GM10248 (cell line): ENCODE measurements at regions of chr22 and their contacts with region 1.

Region 1: DNA sequence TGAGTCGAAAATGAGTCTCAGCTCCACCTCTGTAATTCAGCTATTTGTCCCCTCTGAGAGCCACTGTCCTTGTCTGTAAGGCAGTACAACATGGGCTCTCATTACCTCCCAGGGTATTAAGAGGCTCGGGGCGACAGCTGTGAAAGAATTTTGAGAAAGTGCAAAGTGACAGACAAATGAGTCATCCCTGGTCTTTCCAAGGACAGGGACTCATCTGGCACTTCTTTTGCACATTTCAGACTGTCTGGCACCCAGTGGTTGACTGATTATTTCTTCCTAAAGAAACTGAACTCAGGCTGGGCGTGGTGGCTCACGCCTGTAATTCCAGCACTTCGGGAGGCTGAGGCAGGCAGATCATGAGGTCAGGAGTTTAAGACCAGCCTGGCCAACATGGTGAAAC is 62.1 kb upstream of the ARFGAP3 start:
- DNase-seq: no peak
- CTCF ChIP-seq: no peak

Region 2: GRCh38 chr22:42717197-42717928 is 201.8 kb before region 1 on chr22:
- CTCF ChIA-PET with region 1: no interaction called
- POLR2A ChIA-PET with region 1: no interaction called
- DNase-seq: no peak
- CTCF ChIP-seq: no peak

Region 3: GRCh38 chr22:42856865-42857704 is 62.1 kb before region 1 on chr22 and contains the start of gene ARFGAP3:
- CTCF ChIA-PET with region 1: no interaction called
- POLR2A ChIA-PET with region 1: interaction called, 12 read pairs
- DNase-seq: peak; percentile 100
- CTCF ChIP-seq: no peak

Region 4: DNA sequence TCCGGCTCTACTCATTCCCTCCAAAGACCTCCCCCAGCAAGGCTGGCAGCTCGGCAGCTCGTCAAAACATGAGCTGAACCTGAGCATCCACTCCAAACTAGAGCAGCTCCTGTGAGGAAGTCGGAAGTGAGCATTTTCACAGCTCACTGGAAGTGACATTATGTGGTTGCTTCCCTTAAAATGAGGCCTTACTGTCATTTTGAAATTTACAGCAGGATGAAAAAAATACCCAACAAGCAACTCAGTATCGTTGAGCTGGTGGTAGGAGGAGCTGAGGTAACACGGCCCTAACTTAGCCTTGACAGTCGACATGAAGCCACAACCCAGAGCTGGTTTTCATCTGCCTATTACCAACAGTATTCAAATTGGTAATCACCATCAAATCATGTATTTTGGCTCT is 24.1 kb before region 1 on chr22:
- CTCF ChIA-PET with region 1: interaction called, 11 read pairs
- POLR2A ChIA-PET with region 1: no interaction called
- DNase-seq: peak; percentile 64
- CTCF ChIP-seq: no peak

Region 5: DNA sequence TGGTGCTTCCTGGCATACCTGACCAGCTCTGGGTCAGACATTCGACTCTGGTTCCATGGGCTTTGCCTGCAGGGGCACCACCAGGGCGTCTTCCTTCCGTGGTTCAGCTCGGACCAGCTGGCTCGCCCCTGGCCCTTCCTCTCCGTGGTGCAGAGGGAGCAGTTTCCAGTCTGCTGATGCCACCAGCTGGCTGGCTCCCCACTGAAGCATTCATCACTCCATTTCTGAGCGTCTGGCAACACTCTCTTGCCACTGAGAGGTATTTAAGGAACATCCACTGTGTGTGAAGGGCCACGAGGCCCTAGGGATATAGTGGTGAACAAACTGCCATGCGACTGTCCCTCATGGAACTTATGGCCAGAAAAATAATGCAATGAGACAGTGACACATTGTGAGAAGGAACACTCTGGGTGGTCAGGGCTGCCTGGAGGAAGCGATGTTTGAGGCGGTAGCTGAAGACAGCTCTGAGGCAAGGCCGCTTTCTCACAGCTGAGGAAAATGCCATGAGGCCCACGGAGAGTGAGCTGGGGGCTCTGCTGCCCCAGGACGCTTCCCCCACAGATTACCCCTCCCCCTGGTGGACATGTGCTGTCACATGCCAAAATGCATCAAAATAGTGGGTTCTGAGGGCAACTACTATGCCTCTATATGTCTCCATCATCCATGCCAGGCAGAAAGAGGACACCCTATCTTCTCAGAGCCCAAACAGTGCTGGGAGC is 17.2 kb before region 1 on chr22:
- CTCF ChIA-PET with region 1: interaction called, 10 read pairs
- POLR2A ChIA-PET with region 1: no interaction called
- DNase-seq: no peak
- CTCF ChIP-seq: peak; percentile 27

Region 6: DNA sequence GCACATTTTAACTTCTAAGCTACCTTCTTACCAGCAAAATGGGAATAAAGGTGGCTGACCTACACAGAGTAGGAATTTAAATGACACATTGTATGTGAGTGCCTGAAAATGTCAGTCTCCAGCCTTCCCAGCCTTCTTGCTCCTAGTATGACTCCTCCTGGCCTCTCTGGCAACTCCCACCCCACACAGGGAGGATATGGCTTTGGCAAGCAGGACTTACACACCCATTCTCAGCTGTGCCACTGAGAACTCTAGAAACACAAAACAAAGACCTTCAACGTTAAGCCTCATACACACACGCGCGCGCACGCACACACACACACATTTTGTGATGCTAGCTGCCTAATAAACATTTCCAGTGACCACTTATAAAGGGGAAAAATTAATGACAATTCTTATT is 30.0 kb after region 1 on chr22:
- CTCF ChIA-PET with region 1: interaction called, 10 read pairs
- POLR2A ChIA-PET with region 1: no interaction called
- DNase-seq: no peak
- CTCF ChIP-seq: no peak

Region 7: DNA sequence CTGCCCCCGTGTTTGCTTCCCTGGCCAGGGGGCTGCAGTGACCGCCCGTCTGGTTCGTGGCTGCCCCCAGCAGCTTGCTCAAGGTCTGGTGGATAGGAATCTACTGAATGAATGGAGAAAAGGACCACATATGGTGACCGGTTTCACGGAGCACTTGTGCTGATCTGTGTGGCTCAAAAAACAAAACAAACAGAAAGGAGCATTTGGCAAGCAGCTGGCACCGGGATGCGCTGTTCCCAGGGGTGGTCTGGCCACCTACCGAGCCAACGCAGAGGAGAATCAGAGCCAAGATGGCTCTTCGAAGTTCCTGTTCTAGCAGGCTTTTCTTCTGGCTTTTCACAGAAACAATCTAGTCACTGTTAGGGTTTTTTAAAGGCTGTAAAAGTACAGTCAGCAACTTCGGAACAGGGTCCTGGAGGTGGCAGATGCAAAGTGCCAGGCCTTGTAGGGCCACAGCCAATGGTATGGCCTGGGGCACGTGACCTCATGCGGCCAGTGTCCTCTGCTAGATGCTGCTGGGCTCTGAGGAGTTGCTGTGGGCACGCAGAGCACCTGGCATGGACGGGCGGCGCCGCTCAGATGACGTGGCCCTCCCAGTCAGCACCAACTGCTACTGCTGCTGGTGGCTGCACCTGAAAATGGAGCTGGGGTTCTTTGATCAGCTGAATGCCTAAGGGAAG is 123.0 kb after region 1 on chr22:
- CTCF ChIA-PET with region 1: no interaction called
- POLR2A ChIA-PET with region 1: no interaction called
- DNase-seq: no peak
- CTCF ChIP-seq: no peak